Left ventricle myocardium inferior (tissue), 1 donor: ENCODE measurements at regions of chr12 and their contacts with region 1.

Region 1: GRCh38 chr12:62799126-62799736 is 135.7 kb downstream of the PPM1H start:
- DNase-seq: no peak
- H3K4me3 ChIP-seq: no peak overlapping the region
- H3K27ac ChIP-seq: no peak overlapping the region
- H3K4me1 ChIP-seq: peaks cover 3% of the 10 kb centered on the region
- H3K27me3 ChIP-seq: no peaks in the 10 kb centered on the region
- CTCF ChIP-seq: peak; percentile 97

Region 2: DNA sequence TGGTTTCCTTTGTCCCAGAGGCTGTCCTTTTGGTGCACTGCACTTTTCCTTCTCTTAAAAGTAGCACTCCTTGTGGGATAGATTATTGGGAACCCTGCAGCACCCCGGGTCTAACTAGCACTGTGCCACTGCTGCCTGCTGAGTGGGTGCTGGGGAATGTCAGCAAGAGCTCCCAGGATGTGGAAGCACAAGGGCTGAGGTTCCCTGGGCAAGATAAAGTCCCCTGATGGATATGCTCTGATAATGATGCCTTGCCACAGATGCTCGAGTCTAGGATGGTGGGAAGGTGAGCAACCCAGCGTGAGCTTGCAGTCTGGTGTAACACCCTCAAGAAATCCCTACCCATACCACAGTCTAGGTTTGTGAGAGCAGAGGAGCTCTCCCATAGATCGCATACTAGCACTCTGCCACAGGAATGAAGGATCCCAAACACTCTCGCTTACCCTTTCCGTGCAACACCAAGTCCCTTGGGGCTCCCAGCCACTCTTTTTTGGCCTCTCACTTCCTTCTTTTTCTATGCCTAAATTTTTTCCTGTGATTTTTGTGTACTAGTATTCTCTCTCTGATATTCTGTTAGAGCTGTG is 506.4 kb before region 1 on chr12:
- intact Hi-C with region 1: no loop called
- DNase-seq: no peak
- H3K4me3 ChIP-seq: no peak overlapping the region
- H3K27ac ChIP-seq: no peak overlapping the region
- H3K4me1 ChIP-seq: peaks cover 30% of the 10 kb centered on the region
- H3K27me3 ChIP-seq: no peaks in the 10 kb centered on the region
- CTCF ChIP-seq: no peak

Region 3: DNA sequence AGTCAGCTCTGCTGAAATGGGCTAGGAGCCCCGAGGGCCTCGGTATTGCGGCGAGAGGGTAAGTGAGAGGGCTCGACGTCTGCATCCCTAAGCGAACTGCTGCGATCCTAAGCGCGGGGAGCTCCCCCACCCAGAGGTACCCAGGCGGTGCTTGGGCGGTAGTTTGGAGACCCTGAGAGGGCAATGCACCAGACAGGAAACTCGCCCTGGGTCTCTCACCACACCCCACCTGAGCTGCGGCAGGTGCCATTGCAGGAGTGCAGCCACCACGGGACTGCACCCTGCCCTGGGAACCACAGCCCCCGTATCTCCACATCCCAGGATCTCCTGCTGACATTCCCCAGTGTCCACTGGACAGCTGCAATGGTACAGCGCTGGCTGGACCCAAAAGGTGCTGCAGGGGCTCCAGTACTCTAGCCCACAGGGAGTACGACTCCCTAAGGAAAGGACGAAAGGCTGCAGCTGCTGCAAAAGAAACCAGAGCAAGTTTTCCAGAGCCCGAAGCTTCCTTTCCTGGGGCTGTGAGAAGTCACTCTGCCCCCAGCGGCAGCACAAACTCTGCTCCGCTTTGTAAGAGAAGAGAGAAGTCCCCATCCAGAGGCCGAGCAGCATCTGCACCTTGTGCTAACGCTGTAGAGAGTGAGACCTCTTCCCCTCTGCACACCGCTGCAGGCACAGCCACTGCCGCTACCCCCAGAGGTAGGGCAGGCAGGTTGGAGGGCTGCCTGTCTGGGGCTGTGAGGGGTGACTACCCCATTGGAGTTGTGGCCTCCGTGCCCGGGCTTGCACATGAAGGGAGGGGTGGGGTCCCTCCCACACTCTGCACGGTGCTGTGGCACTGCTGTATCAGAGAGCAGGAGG is 363.7 kb before region 1 on chr12:
- intact Hi-C with region 1: loop called (anchors 10 kb)
- DNase-seq: peak; percentile 18
- H3K4me3 ChIP-seq: peak overlapping the region; percentile 67
- H3K27ac ChIP-seq: no peak overlapping the region
- H3K4me1 ChIP-seq: peaks cover 17% of the 10 kb centered on the region
- H3K27me3 ChIP-seq: peaks cover 55% of the 10 kb centered on the region
- CTCF ChIP-seq: peak; percentile 54

Region 4: DNA sequence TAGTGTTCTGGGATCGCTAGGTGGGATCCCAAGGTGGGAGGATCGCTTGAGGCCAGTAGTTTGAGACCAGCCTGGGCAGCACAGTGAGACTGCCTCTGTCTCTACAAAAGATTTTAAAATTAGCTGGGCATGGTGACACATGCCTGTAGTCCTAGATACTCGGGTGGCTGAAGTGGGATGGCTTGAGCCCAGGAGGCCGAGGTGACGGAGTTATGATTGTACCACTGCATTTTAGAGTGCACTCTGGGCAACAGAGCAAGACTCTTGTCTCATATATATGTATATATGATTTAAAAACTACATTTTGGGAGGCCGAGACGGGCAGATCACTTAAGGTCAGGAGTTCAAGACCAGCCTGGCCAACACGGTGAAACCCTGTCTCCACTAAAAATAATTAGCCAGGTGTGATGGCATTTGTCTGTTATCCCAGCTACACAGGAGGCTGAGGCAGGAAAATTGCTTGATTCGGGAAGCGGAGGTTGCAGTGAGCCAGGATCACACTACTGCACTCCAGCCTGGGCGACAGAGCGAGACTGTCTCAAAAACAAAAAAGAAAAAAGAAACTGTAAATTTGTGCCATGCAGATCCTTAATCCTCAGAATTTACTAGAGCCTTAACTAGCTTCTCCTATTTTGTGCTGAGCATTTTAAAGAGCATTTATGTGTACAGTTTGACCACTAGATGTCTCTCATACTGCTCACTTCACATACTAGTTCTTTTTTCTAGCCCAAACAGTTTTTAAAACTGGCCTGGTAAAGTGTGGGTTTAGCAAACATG is 217.8 kb before region 1 on chr12:
- intact Hi-C with region 1: loop called (anchors 5 kb)
- DNase-seq: peak; percentile 26
- H3K4me3 ChIP-seq: no peak overlapping the region
- H3K27ac ChIP-seq: peak overlapping the region; percentile 31
- H3K4me1 ChIP-seq: peaks cover 4% of the 10 kb centered on the region
- H3K27me3 ChIP-seq: no peaks in the 10 kb centered on the region
- CTCF ChIP-seq: peak; percentile 78